ENCODE measurements at regions of chr2 and their contacts with region 1.

Region 1: GRCh38 chr2:210195101-210195852 is 24.1 kb upstream of the KANSL1L start:
- DNase-seq: no peak
- H3K4me3 ChIP-seq: no peak overlapping the region
- H3K27ac ChIP-seq: no peak overlapping the region
- H3K4me1 ChIP-seq: no peaks in the 10 kb centered on the region
- H3K27me3 ChIP-seq: no peaks in the 10 kb centered on the region
- CTCF ChIP-seq: peak; percentile 50 to 69 (median 59)
- EP300 ChIP-seq: no peak
- POLR2A ChIP-seq: no peak

Region 2: DNA sequence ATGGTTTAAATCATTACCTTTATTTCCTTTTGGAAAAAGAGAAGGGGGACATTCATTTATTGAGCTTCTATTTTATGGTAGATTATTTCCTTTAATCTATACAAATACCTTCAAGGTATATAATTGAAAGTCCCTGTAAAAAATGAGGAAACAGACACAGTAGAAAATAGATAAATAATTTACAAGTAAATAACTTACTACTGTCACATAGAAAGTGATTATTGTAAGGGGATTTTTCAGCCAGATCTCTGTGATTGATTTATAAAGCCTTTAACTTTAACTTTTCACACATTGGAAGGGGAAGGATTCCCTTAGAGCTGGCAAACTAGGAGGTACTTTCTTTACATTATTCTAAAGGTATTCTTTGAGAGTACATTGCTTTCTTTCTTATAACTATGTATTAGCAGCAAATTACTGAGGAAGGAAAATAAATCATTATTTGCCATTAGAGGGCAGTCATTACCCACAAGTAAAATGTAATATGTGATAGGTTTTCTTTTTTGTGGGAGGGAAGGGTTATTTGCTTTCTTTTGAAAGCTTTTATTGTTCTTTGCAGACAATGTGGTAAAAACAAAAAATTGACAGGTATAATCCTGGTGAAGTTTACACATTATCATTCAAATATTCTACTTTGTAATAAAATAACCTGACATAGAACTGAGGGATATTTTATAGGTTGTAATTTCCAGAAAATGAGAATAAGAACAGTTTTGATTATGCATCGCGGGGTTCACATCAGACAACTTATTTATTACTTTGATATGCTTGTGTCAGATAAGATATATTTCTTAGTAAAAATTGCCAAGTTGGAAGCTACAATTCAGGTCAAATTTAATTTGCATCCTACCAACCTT is 217.7 kb before region 1 on chr2:
- intact Hi-C with region 1: loop called (anchors 5 kb)
- DNase-seq: no peak
- H3K4me3 ChIP-seq: no peak overlapping the region
- H3K27ac ChIP-seq: no peak overlapping the region
- H3K4me1 ChIP-seq: no peaks in the 10 kb centered on the region
- H3K27me3 ChIP-seq: no peaks in the 10 kb centered on the region
- CTCF ChIP-seq: peak in 2 of 3 donors; percentile 37 to 48
- EP300 ChIP-seq: no peak
- POLR2A ChIP-seq: no peak

Region 3: GRCh38 chr2:210002158-210003157 is 192.8 kb before region 1 on chr2 and contains the start of gene RPE:
- intact Hi-C with region 1: loop called in 1 of 4 experiments (anchors 10 kb)
- DNase-seq: peak; percentile 94 to 98 (median 96)
- H3K4me3 ChIP-seq: peak within 1 kb of the TSS; percentile 72
- H3K27ac ChIP-seq: peak within 1 kb of the TSS in 1 of 2 donors; percentile 41
- H3K4me1 ChIP-seq: peaks cover 7% of the 10 kb centered on the region
- H3K27me3 ChIP-seq: no peaks in the 10 kb centered on the region
- CTCF ChIP-seq: no peak
- EP300 ChIP-seq: no peak
- POLR2A ChIP-seq: peak; percentile 40
- total RNA-seq, gene RPE: 33.0 to 54.8 (median 43.3) TPM